Heart right ventricle (tissue), 16 donors: ENCODE measurements at regions of chr18 and their contacts with region 1.

Region 1: GRCh38 chr18:23383459-23383858 is 69.6 kb upstream of the RIOK3 start:
- DNase-seq: no peak
- ATAC-seq: no peak
- H3K4me3 ChIP-seq: no peak overlapping the region
- H3K27ac ChIP-seq: no peak overlapping the region
- H3K4me1 ChIP-seq: peaks cover 0 to 7% (median 3%) of the 10 kb centered on the region in 9 donors
- H3K27me3 ChIP-seq: no peaks in the 10 kb centered on the region
- CTCF ChIP-seq: no peak

Region 2: GRCh38 chr18:23406271-23406787 is 22.9 kb after region 1 on chr18:
- intact Hi-C with region 1: loop called in 1 of 10 experiments (anchors 1 kb)
- DNase-seq: no peak
- ATAC-seq: peak in 4 of 8 donors; percentile 42 to 63 (median 52)
- H3K4me3 ChIP-seq: no peak overlapping the region
- H3K27ac ChIP-seq: no peak overlapping the region
- H3K4me1 ChIP-seq: peaks cover 0 to 4% (median 0%) of the 10 kb centered on the region in 9 donors
- H3K27me3 ChIP-seq: no peaks in the 10 kb centered on the region
- CTCF ChIP-seq: no peak